ENCODE measurements at regions of chr20 and their contacts with region 1.

Region 1: GRCh38 chr20:32789896-32790750 is 27.9 kb downstream of the DNMT3B start:
- DNase-seq: peak; percentile 75
- H3K4me3 ChIP-seq: no peak overlapping the region
- H3K27ac ChIP-seq: no peak overlapping the region
- H3K4me1 ChIP-seq: no peaks in the 10 kb centered on the region
- CTCF ChIP-seq: peak; percentile 97

Region 2: DNA sequence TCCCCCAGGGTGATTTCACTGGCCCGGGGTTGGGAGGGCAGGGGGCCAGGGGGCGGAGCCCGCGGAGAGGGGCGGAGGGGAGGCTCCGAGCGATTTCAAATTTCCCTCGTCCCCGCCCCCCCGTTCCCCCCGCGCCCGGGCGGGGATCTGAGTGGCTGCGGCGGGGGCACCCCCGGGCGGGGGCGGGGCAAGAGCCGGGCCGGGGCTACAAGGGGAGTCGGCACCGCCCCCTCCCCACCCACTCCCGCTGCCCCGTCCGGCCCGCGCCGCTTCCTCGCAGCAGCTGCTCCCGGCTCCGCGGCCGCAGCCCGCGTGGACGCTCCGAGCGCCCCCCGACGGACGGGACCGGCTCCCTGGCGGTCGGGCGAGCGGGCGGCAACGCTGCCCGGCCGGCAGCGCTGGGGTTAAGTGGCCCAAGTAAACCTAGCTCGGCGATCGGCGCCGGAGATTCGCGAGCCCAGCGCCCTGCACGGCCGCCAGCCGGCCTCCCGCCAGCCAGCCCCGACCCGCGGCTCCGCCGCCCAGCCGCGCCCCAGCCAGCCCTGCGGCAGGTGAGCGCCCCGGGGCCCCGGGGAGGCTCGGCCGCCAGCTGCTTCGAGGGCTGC is 27.9 kb before region 1 on chr20 and contains the start of gene DNMT3B:
- CTCF ChIA-PET with region 1: no interaction called
- POLR2A ChIA-PET with region 1: no interaction called
- intact Hi-C with region 1: no loop called
- DNase-seq: peak; percentile 91
- H3K4me3 ChIP-seq: peak within 1 kb of the TSS; percentile 81
- H3K27ac ChIP-seq: peak within 1 kb of the TSS; percentile 58
- H3K4me1 ChIP-seq: peaks cover 33% of the 10 kb centered on the region
- CTCF ChIP-seq: peak; percentile 26; the same call in 1 of the 2 replicates
- total RNA-seq, gene DNMT3B: 11.4 and 12.1 TPM in 2 replicates

Region 3: DNA sequence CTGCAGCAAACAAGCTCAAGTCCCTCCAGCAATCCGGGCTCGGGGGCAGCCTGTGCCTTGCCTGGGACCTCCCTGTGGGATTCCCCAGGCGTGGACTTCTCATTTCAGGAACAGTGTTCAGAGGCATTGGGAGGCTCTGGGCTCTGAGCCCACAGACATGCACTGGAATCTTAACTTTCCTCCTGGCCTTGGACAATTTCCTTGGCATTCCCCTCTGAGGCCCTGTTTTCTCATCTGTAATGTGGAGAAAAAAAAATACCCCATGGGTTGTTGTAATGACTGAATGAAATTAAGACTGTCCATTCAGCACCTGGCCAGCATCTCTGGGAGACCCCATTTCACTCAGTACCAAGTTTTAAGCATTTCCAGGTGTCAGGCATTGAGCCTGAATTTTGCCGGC is 306.9 kb after region 1 on chr20:
- CTCF ChIA-PET with region 1: interaction called, 3 read pairs
- POLR2A ChIA-PET with region 1: no interaction called
- intact Hi-C with region 1: loop called (anchors 1 kb)
- DNase-seq: no peak
- H3K4me3 ChIP-seq: no peak overlapping the region
- H3K27ac ChIP-seq: no peak overlapping the region
- H3K4me1 ChIP-seq: no peaks in the 10 kb centered on the region
- CTCF ChIP-seq: no peak